PC-9 (cell line): ENCODE measurements at regions of chrX and their contacts with region 1.

Region 1: GRCh38 chrX:74119016-74119910 is 184.7 kb upstream of the ZCCHC13 start:
- DNase-seq: peak; percentile 40 to 78
- H3K4me3 ChIP-seq: peak overlapping the region; percentile 20; the same call in 1 of the 2 replicates
- H3K27ac ChIP-seq: peak overlapping the region; percentile 81
- H3K4me1 ChIP-seq: peaks cover 30% of the 10 kb centered on the region
- H3K27me3 ChIP-seq: no peaks in the 10 kb centered on the region
- CTCF ChIP-seq: no peak

Region 2: GRCh38 chrX:73863268-73863667 is 256.0 kb before region 1 on chrX:
- CTCF ChIA-PET with region 1: no interaction called
- POLR2A ChIA-PET with region 1: no interaction called
- intact Hi-C with region 1: loop called (anchors 5 kb)
- DNase-seq: no peak
- H3K4me3 ChIP-seq: no peak overlapping the region
- H3K27ac ChIP-seq: no peak overlapping the region
- H3K4me1 ChIP-seq: no peaks in the 10 kb centered on the region; the same call in 1 of the 2 replicates
- H3K27me3 ChIP-seq: no peaks in the 10 kb centered on the region
- CTCF ChIP-seq: no peak

Region 3: DNA sequence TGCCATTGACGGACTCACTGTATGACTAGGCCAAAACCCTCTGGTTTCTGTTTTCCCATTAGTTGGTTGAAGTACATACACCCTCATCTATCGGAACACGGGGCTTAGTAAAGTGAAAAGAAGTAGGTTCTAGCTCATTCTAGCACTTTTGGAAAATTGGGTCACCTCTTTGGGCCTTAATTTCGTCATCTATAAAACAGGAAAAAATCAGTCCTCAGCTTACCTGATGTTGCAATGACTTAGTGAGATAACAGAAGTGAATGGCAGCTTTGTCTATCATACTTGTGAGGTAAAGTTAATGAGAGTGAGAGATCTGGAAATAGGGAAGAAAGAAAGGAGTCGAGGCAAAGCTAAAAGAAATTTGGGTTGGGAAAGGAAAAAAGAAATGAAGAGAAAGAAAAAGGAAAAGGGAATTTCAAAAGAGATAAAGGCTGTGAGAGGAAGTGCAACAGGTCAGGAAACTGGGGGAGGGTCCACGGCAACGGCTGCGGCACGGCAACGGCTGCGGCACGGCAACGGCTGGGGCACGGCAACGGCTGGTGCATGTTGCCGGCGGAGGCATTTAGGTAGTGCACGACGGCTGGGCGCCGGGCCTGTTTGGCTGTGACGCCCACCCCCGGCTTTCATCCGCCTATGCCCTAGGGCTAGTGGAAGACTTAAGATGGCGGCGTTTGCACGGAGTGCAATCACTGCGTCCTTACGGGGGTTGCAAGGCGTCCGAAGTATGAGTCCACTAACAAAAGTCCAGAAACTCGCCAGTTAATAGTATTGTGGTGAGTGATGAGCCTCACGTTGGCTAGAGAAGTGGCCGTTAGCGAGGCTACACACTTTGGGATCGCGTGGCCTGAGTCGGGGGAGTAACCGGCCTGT is 175.3 kb before region 1 on chrX:
- CTCF ChIA-PET with region 1: no interaction called
- POLR2A ChIA-PET with region 1: no interaction called
- intact Hi-C with region 1: loop called (anchors 1 kb)
- DNase-seq: peak; percentile 75 to 81
- H3K4me3 ChIP-seq: peak overlapping the region; percentile 99
- H3K27ac ChIP-seq: peak overlapping the region; percentile 69
- H3K4me1 ChIP-seq: peaks cover 10% of the 10 kb centered on the region
- H3K27me3 ChIP-seq: no peaks in the 10 kb centered on the region
- CTCF ChIP-seq: no peak

Region 4: GRCh38 chrX:74061879-74062278 is 57.4 kb before region 1 on chrX:
- CTCF ChIA-PET with region 1: no interaction called
- POLR2A ChIA-PET with region 1: no interaction called
- intact Hi-C with region 1: loop called (anchors 1 kb)
- DNase-seq: peak in 1 of 2 experiments; percentile 3
- H3K4me3 ChIP-seq: no peak overlapping the region
- H3K27ac ChIP-seq: no peak overlapping the region
- H3K4me1 ChIP-seq: peaks cover 36% of the 10 kb centered on the region
- H3K27me3 ChIP-seq: no peaks in the 10 kb centered on the region
- CTCF ChIP-seq: no peak